Activated CD4-positive, alpha-beta T cell treated with anti-CD3 and anti-CD28 coated beads, Interleukin-2, amount 10 ng/mL, durations not matched to agents 24 days and 14 days (primary cell): ENCODE measurements at regions of chr12 and their contacts with region 1.

Region 1: GRCh38 chr12:89019408-89020120 is 332.7 kb downstream of the DUSP6 start:
- DNase-seq: peak; percentile 94
- H3K4me3 Mint-ChIP-seq: no peak overlapping the region
- H3K27ac Mint-ChIP-seq: no peak overlapping the region
- H3K4me1 Mint-ChIP-seq: peaks cover 18% of the 10 kb centered on the region
- H3K27me3 Mint-ChIP-seq: peaks cover 5% of the 10 kb centered on the region

Region 2: DNA sequence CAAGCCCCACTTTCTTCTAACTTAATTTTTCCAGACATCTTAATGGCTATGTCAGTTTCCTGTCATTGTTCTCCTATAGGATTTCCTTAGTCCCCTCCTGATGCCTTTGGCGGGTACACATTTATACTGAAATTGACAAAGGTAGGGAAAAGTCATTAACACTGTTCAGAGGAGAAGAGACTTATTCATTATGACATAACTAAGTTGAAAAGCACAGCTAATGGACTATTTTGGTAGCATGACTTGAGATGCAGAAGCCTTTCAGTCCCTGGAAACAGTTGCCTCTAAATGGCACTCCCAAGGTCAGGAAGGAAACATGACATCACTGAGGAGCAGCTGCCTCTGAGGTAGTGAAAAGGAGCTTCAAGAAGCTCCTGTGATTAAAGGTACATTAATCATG is 121.8 kb before region 1 on chr12:
- intact Hi-C with region 1: no loop called
- DNase-seq: no peak
- H3K4me3 Mint-ChIP-seq: no peak overlapping the region
- H3K27ac Mint-ChIP-seq: no peak overlapping the region
- H3K4me1 Mint-ChIP-seq: no peaks in the 10 kb centered on the region
- H3K27me3 Mint-ChIP-seq: no peaks in the 10 kb centered on the region

Region 3: DNA sequence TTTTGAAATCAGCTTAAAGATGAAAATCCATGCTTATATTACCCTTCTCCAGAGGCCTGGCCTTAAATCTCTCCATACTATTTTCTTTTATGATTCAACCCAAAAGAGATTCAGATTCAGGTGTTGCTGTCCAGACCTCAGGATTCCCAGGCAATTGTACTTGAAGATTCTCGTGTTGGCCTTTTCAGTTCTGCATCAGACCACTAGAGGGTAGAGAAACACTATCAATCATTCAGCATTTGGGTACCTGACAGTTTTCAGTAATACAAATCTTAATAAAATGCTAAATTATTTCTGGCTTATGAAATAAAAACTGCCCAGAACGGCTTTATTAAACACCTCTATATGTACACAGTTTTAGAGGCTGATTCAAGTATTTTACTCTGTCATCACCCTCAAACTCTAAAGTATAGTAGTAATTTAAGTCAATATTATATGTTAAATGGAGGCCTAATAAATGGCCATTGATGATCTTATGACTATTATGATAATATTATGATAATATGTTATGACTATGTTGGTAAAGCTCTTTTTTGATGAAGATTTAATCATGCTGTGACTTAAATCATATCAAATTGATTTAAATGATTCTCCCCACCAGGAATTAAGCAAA is 31.6 kb after region 1 on chr12:
- intact Hi-C with region 1: loop called (anchors 1 kb)
- DNase-seq: peak; percentile 82
- H3K4me3 Mint-ChIP-seq: no peak overlapping the region
- H3K27ac Mint-ChIP-seq: no peak overlapping the region
- H3K4me1 Mint-ChIP-seq: peaks cover 24% of the 10 kb centered on the region
- H3K27me3 Mint-ChIP-seq: no peaks in the 10 kb centered on the region

Region 4: DNA sequence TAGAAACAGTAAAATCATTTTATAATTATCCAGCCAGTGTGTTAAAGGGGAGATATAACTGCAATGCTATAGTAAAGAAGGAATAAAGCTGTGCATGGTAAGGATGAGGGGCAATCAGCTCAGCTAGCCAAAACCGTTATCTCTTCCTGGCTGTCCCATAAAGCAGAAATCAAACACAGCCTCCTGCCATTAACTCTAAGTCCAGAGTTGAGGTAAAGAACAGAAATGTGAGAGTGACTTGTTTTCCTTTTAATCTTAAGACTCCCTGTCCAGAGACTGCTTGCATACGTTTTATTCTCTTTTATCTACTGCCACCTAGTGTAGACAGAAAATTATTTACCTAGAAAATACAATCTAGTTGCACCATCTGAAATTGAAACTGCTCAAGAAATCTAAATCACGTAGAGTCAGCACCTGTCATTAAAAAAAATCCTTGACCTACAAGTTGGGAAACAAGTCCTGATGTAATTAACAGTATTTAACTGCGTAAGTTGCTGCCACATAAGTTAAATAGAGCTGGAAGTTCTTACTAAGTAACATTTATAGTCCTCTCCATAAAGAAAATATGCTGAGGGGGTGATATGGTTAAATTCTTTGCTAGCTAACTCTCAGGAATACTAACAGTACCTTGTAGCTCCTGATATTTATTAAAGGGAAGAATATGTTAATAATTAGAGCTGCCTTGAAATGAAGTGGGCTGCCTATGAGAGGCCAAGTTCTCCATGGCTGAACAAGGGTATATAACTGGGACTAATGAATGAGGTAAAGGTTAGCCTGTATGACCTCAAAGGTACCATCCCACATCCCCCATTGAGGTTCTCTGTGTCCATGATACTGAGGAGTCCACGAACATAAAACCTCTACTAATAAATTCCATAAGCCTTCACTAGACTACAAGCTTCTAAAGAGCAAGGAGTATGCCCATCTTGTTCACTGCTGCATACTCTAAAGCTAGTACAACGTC is 442.4 kb after region 1 on chr12:
- intact Hi-C with region 1: loop called (anchors 1 kb)
- DNase-seq: peak; percentile 65
- H3K4me3 Mint-ChIP-seq: peak overlapping the region; percentile 77
- H3K27ac Mint-ChIP-seq: peak overlapping the region; percentile 64
- H3K4me1 Mint-ChIP-seq: peaks cover 39% of the 10 kb centered on the region
- H3K27me3 Mint-ChIP-seq: no peaks in the 10 kb centered on the region

Region 5: DNA sequence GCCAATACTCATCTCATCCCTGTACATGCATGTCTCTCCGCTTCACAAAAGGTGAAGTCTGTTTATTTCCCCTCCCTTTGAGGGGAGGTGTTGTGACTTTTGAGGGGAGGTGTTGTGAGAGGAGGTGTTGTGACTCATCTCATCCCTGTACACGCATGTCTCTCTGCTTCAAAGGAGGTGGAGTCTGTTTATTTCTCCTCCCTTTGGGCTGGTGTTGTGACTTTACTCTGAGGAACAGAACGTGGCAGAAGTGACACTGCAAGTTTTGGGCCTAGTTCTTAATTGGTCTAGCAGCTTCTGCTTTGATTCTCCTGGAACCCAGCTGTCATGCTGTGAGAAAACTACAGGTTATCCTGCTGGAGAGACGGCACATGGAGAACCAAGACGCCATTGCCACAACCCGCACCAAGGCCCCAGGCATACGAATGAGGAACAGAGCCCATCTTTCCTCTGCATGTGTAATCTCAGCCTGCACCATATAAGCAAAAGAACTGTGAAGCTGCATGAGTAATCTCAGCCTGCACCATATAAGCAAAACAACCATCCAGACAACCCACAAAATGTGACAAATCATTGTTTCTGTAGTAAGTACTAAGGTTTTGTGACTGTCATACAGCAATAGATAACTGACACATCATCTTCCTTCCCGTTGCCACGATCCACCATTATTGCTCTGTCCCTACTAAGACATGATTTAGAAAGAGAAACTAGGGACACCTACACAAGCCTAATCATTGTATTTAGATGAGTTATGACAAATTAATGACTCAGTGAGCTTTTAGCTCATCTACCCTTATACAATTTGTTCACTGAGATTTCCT is 475.1 kb after region 1 on chr12:
- intact Hi-C with region 1: loop called (anchors 1 kb)
- DNase-seq: peak; percentile 72
- H3K4me3 Mint-ChIP-seq: peak overlapping the region; percentile 44
- H3K27ac Mint-ChIP-seq: peak overlapping the region; percentile 96
- H3K4me1 Mint-ChIP-seq: peaks cover 14% of the 10 kb centered on the region
- H3K27me3 Mint-ChIP-seq: no peaks in the 10 kb centered on the region

Region 6: DNA sequence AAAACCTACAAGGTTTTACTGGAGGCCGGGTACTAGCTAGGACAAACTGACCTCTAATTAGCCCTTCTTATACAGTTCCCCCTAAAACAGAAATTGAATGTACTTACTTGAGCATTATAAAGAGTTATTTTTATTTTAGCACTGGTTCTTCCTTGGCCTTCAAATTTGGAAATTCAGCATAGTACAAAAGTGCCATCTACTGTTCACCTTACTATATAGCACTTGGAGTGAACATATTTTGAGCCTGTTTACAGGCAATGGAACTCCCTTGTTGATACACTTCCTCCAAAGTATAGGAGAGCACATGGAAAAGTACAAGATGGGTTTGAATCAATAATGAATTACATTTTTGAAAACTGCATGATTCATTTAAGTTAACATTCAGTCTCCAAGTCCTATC is 510.2 kb after region 1 on chr12:
- intact Hi-C with region 1: loop called (anchors 1 kb)
- DNase-seq: peak; percentile 74
- H3K4me3 Mint-ChIP-seq: no peak overlapping the region
- H3K27ac Mint-ChIP-seq: no peak overlapping the region
- H3K4me1 Mint-ChIP-seq: peaks cover 24% of the 10 kb centered on the region
- H3K27me3 Mint-ChIP-seq: no peaks in the 10 kb centered on the region

Region 7: GRCh38 chr12:90102957-90103652 is 1083.5 kb after region 1 on chr12:
- intact Hi-C with region 1: loop called (anchors 10 kb)
- DNase-seq: peak; percentile 64
- H3K4me3 Mint-ChIP-seq: no peak overlapping the region
- H3K27ac Mint-ChIP-seq: no peak overlapping the region
- H3K4me1 Mint-ChIP-seq: peaks cover 5% of the 10 kb centered on the region
- H3K27me3 Mint-ChIP-seq: peaks cover 14% of the 10 kb centered on the region